Vagina (tissue), 2 donors: ENCODE measurements at regions of chr13 and their contacts with region 1.

Region 1: GRCh38 chr13:46146899-46147298 is 35.1 kb downstream of the LCP1 start:
- DNase-seq: no peak
- H3K4me3 ChIP-seq: no peak overlapping the region
- H3K27ac ChIP-seq: no peak overlapping the region
- H3K4me1 ChIP-seq: no peaks in the 10 kb centered on the region
- H3K27me3 ChIP-seq: no peaks in the 10 kb centered on the region
- CTCF ChIP-seq: no peak
- POLR2A ChIP-seq: no peak

Region 2: DNA sequence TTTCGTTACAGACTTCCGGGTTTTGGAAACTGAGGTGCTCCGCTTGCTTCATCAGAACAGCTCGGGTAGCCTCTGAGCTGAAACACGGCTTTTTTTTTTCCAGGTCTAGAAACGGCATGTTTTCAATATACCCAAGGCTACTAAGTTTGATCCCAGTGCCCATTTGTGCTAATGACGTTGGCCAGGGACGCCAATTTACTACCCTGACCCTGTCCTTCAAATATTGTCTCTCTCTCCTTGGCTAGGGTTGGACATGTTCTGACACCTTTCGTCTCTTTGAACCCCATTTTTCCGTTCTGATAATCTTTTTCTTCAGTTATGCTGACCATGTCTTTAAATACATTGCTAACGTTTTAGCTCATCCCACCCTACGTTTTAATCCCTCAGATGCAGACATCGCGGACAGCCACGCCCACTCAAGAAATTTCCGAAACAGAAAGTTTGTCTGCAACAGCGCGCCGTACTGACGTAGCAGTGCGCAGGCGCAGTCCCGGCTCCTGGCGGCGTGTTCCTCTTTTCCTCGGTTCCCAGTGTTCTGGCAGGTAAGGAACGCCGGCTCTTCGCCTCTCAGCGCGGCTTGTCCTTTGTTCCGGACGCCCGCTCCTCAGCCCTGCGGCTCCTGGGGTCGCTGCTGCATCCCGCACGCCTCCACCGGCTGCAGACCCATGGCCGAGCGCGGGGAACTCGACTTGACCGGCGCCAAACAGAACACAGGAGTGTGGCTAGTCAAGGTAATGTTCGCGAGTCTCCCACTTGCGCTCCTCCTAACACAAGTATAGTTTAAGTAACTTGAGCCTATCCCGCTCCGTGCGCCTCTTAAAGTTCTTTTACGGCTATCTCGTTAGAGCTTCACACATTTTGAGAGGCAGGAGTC is 1026.7 kb before region 1 on chr13 and contains the start of gene GTF2F2:
- intact Hi-C with region 1: no loop called
- DNase-seq: peak; percentile 89 to 97
- H3K4me3 ChIP-seq: peak within 1 kb of the TSS; percentile 86 to 89
- H3K27ac ChIP-seq: peak within 1 kb of the TSS; percentile 82
- H3K4me1 ChIP-seq: peaks cover 27% of the 10 kb centered on the region
- H3K27me3 ChIP-seq: no peaks in the 10 kb centered on the region
- CTCF ChIP-seq: no peak
- POLR2A ChIP-seq: peak in 1 of 2 donors; percentile 7
- total RNA-seq, gene GTF2F2: 18.9 TPM

Region 3: DNA sequence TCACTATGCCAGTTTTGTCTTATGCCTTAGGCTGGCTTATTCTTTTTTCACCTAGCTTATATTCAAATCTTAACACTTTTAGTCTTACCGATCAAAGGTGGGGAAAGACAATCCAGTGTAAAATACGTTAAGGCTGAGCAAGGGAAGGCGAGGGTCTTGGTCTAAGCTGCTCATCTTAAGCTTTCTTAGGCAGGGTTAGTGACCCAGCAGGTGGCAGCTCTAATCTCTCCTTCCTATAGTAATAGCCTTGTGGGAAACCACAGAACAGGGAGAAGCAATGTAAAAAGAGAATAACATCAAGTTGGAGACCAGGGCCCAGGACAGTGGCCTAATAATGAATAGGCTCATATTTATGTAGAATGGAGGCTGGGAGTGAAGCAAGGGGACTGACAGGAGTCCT is 636.2 kb before region 1 on chr13:
- intact Hi-C with region 1: no loop called
- DNase-seq: no peak
- H3K4me3 ChIP-seq: no peak overlapping the region
- H3K27ac ChIP-seq: no peak overlapping the region
- H3K4me1 ChIP-seq: no peaks in the 10 kb centered on the region
- H3K27me3 ChIP-seq: no peaks in the 10 kb centered on the region
- CTCF ChIP-seq: no peak
- POLR2A ChIP-seq: no peak

Region 4: DNA sequence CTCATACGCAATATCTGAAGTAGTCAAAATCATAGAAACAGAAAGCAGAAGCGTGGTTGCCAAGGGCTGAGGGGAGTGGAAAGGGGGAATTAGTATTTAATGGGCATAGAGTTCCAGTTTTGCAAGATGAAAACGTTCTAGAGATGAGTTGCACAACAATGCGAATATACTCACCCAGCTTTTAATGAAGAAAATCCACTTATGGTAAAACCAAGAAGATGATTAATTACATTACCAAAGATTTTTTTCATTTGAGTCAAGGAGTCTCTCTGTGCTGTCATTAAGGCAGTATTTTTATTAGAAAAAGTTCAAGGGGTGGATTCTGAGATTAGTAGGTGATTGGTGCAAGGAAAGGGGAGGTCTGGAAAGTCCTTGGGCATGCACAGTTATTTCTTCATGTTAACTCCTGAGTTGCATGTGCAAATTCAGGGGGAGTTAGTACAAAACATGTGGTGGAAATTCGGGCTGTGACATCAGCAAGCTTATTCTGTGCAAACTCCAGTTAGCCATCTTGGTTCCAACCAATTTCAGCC is 451.6 kb before region 1 on chr13:
- intact Hi-C with region 1: loop called (anchors 10 kb)
- DNase-seq: peak in 1 of 2 donors; percentile 52
- H3K4me3 ChIP-seq: no peak overlapping the region
- H3K27ac ChIP-seq: no peak overlapping the region
- H3K4me1 ChIP-seq: no peaks in the 10 kb centered on the region
- H3K27me3 ChIP-seq: no peaks in the 10 kb centered on the region
- CTCF ChIP-seq: no peak
- POLR2A ChIP-seq: no peak

Region 5: GRCh38 chr13:46088821-46089562 is 57.9 kb before region 1 on chr13:
- intact Hi-C with region 1: no loop called
- DNase-seq: no peak
- H3K4me3 ChIP-seq: no peak overlapping the region
- H3K27ac ChIP-seq: no peak overlapping the region
- H3K4me1 ChIP-seq: no peaks in the 10 kb centered on the region
- H3K27me3 ChIP-seq: no peaks in the 10 kb centered on the region
- CTCF ChIP-seq: no peak
- POLR2A ChIP-seq: no peak

Region 6: DNA sequence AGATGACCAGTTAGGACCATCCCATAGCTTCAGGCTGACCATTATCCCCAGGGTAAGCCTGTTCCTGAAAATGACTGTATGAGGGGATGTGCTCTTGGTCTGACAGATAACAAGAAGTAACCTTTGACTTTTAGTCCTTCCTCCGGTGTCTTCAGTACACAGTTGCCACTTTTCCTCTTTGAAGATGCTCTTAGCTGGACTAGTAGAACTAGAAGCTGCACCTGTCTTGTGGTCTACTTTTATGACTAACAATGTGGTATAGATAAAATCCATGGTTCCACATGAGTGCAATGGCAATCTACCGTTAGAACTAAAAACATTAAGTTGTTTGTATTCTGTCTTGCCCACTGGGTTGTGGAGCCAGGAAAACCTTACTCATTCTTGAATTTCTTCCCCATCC is 246.1 kb after region 1 on chr13:
- intact Hi-C with region 1: no loop called
- DNase-seq: no peak
- H3K4me3 ChIP-seq: no peak overlapping the region
- H3K27ac ChIP-seq: no peak overlapping the region
- H3K4me1 ChIP-seq: peaks cover 15% of the 10 kb centered on the region
- H3K27me3 ChIP-seq: no peaks in the 10 kb centered on the region
- CTCF ChIP-seq: no peak
- POLR2A ChIP-seq: no peak